MCF 10A (cell line): ENCODE measurements at regions of chr1 and their contacts with region 1.

Region 1: GRCh38 chr1:160193091-160193819 is 2.9 kb downstream of the CASQ1 start:
- DNase-seq: peak; percentile 94
- H3K4me3 Mint-ChIP-seq: no peak overlapping the region
- H3K27ac Mint-ChIP-seq: no peak overlapping the region
- H3K4me1 Mint-ChIP-seq: no peaks in the 10 kb centered on the region
- H3K27me3 Mint-ChIP-seq: no peaks in the 10 kb centered on the region
- CTCF ChIP-seq: peak; percentile 100

Region 2: DNA sequence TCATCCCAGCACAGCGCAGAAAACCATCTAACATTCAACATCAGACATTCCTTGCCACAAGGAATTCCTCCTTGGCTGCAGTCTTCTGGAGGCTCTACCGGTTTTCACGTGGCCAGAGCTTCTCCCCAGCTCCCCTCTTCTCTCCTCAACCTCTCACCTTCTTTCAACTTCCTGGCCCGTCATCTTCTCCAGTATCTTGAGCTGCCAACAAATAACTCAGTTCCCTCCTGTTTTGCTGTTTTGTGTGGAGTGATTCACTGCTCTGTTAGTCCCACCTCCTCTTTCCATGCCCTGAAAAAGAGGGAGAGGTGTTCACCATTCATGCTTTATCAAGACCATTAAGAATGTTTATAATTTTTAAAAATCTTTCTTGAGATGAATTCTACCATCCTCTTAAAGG is 194.1 kb before region 1 on chr1:
- CTCF ChIA-PET with region 1: no interaction called
- POLR2A ChIA-PET with region 1: no interaction called
- intact Hi-C with region 1: no loop called
- DNase-seq: peak; percentile 17
- H3K4me3 Mint-ChIP-seq: no peak overlapping the region
- H3K27ac Mint-ChIP-seq: peak overlapping the region; percentile 62
- H3K4me1 Mint-ChIP-seq: peaks cover 29% of the 10 kb centered on the region
- H3K27me3 Mint-ChIP-seq: no peaks in the 10 kb centered on the region
- CTCF ChIP-seq: no peak

Region 3: GRCh38 chr1:160161965-160162705 is 31.1 kb before region 1 on chr1:
- CTCF ChIA-PET with region 1: interaction called, 10 read pairs
- POLR2A ChIA-PET with region 1: interaction called, 3 read pairs
- intact Hi-C with region 1: no loop called
- DNase-seq: peak; percentile 17
- H3K4me3 Mint-ChIP-seq: no peak overlapping the region
- H3K27ac Mint-ChIP-seq: no peak overlapping the region
- H3K4me1 Mint-ChIP-seq: no peaks in the 10 kb centered on the region
- H3K27me3 Mint-ChIP-seq: peaks cover 32% of the 10 kb centered on the region
- CTCF ChIP-seq: peak; percentile 29

Region 4: GRCh38 chr1:160211046-160211790 is 18.0 kb after region 1 on chr1:
- CTCF ChIA-PET with region 1: interaction called, 124 read pairs
- POLR2A ChIA-PET with region 1: interaction called, 4 read pairs
- intact Hi-C with region 1: no loop called
- DNase-seq: no peak
- H3K4me3 Mint-ChIP-seq: no peak overlapping the region
- H3K27ac Mint-ChIP-seq: no peak overlapping the region
- H3K4me1 Mint-ChIP-seq: peaks cover 23% of the 10 kb centered on the region
- H3K27me3 Mint-ChIP-seq: no peaks in the 10 kb centered on the region
- CTCF ChIP-seq: no peak

Region 5: GRCh38 chr1:160232911-160233310 is 39.7 kb after region 1 on chr1:
- CTCF ChIA-PET with region 1: interaction called, 18 read pairs
- POLR2A ChIA-PET with region 1: interaction called, 3 read pairs
- intact Hi-C with region 1: no loop called
- DNase-seq: no peak
- H3K4me3 Mint-ChIP-seq: no peak overlapping the region
- H3K27ac Mint-ChIP-seq: peak overlapping the region; percentile 0
- H3K4me1 Mint-ChIP-seq: no peaks in the 10 kb centered on the region
- H3K27me3 Mint-ChIP-seq: no peaks in the 10 kb centered on the region
- CTCF ChIP-seq: no peak

Region 6: GRCh38 chr1:160284782-160285344 is 91.6 kb after region 1 on chr1 and contains the start of gene PEX19:
- CTCF ChIA-PET with region 1: interaction called, 208 read pairs
- POLR2A ChIA-PET with region 1: interaction called, 5 read pairs
- intact Hi-C with region 1: no loop called
- DNase-seq: peak; percentile 97
- H3K4me3 Mint-ChIP-seq: peak within 1 kb of the TSS; percentile 100
- H3K27ac Mint-ChIP-seq: peak within 1 kb of the TSS; percentile 99
- H3K4me1 Mint-ChIP-seq: peaks cover 19% of the 10 kb centered on the region
- H3K27me3 Mint-ChIP-seq: no peaks in the 10 kb centered on the region
- CTCF ChIP-seq: no peak
- total RNA-seq, gene PEX19: 61.2 and 73.2 TPM in 2 replicates

Region 7: DNA sequence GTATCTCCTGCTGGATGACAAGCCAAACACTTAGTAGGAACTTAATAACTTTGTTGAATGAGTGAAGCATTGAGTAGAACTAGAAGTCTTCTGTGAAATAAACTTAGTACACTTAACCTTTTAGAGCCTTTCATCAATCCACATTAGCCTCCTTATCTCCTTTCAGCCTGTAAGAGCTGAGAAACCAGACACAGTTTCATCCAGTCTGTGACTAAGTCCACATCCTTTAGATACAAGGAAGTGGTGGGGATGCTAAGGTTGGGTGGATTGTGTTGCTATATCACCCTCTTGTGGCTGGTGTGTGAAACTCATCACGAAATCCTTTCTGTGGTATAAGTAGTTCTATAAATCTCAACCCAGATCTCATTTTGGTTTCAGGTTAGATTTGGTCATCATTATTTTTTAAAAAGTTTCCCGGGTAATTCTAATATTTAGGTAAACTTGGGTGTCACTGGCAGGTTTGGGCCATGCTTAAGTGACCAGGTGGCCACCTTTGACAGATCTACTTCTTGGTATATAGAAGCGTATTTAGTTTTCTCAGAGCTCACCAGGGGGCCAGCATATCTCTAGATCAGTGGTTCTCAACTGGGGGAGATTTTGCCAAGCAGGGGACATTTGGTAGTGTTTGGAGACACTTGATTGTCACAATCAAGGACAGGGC is 413.9 kb after region 1 on chr1:
- CTCF ChIA-PET with region 1: interaction called, 4 read pairs
- POLR2A ChIA-PET with region 1: no interaction called
- intact Hi-C with region 1: loop called (anchors 10 kb)
- DNase-seq: peak; percentile 85
- H3K4me3 Mint-ChIP-seq: no peak overlapping the region
- H3K27ac Mint-ChIP-seq: no peak overlapping the region
- H3K4me1 Mint-ChIP-seq: no peaks in the 10 kb centered on the region
- H3K27me3 Mint-ChIP-seq: peaks cover 74% of the 10 kb centered on the region
- CTCF ChIP-seq: peak; percentile 96